Vagina (tissue), 2 donors: ENCODE measurements at regions of chr7 and their contacts with region 1.

Region 1: GRCh38 chr7:111486472-111487142 is 75.7 kb downstream of the IMMP2L start:
- DNase-seq: no peak
- H3K4me3 ChIP-seq: no peak overlapping the region
- H3K27ac ChIP-seq: no peak overlapping the region
- H3K4me1 ChIP-seq: no peaks in the 10 kb centered on the region
- H3K27me3 ChIP-seq: no peaks in the 10 kb centered on the region
- CTCF ChIP-seq: peak; percentile 33 to 65 (median 49)
- POLR2A ChIP-seq: no peak

Region 2: GRCh38 chr7:111098011-111098925 is 388.3 kb before region 1 on chr7:
- intact Hi-C with region 1: loop called (anchors 10 kb)
- DNase-seq: no peak
- H3K4me3 ChIP-seq: no peak overlapping the region
- H3K27ac ChIP-seq: no peak overlapping the region
- H3K4me1 ChIP-seq: no peaks in the 10 kb centered on the region
- H3K27me3 ChIP-seq: no peaks in the 10 kb centered on the region
- CTCF ChIP-seq: peak in 1 of 3 experiments; percentile 17
- POLR2A ChIP-seq: no peak

Region 3: DNA sequence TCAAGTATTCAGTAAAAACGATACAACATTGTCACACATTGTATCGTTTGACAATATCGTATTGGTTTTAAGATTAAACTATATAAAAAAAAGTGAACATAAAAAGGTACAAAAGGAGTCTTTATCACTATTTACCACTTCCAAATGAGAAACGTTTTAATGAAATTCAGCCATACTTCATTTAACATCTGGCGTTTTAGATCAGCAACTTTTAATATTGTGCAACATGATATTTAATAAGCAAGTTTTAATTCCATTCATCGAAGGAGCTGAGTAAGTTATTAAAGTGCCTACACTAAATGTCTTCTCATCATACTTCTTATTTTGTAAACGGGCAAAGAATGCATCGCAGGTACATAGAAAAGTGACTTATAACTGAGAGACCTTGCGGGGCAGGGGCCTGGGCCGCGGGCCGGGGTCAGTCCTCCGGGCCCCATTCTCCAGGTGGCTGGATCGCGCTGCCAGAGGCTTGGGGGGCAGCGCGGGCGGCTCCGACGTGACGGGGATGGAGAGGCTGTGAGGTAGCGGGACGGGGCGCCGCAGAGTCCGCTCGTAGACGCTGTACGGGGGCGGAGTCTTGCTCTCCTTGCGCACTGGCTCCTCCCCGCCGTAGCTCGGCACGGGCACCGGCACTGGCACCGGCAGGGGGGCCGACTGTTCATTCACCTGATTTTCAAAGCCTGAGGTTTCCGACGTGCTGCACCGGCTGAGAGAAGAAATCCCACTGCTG is 241.5 kb after region 1 on chr7:
- intact Hi-C with region 1: loop called (anchors 5 kb)
- DNase-seq: no peak
- H3K4me3 ChIP-seq: no peak overlapping the region
- H3K27ac ChIP-seq: no peak overlapping the region
- H3K4me1 ChIP-seq: no peaks in the 10 kb centered on the region
- H3K27me3 ChIP-seq: no peaks in the 10 kb centered on the region
- CTCF ChIP-seq: no peak
- POLR2A ChIP-seq: no peak